MCF 10A (cell line): ENCODE measurements at regions of chr12 and their contacts with region 1.

Region 1: GRCh38 chr12:122051231-122051876 is 27.2 kb upstream of the MLXIP start:
- DNase-seq: no peak
- H3K4me3 Mint-ChIP-seq: no peak overlapping the region
- H3K27ac Mint-ChIP-seq: no peak overlapping the region
- H3K4me1 Mint-ChIP-seq: no peaks in the 10 kb centered on the region
- H3K27me3 Mint-ChIP-seq: no peaks in the 10 kb centered on the region
- CTCF ChIP-seq: no peak

Region 2: DNA sequence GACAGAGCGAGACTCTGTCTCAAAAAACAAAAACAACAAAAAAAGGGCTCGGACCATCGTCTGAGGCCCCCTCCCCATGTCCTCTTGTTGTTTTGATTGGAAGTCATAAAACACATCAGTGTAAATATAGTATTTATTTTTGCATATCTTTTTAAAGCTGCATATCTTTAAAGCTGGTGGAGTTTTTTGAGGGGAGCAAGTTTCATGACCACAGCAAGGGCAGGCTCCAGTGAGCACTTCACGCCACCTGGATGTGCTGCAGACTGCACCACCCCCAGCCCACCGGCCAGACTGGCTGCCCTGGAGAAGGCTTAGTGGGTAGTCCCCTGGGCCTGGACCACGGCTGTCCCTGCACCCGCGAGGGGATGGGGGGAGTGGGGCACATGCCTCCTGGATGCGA is 41.6 kb before region 1 on chr12:
- CTCF ChIA-PET with region 1: no interaction called
- POLR2A ChIA-PET with region 1: no interaction called
- intact Hi-C with region 1: no loop called
- DNase-seq: no peak
- H3K4me3 Mint-ChIP-seq: no peak overlapping the region
- H3K27ac Mint-ChIP-seq: no peak overlapping the region
- H3K4me1 Mint-ChIP-seq: no peaks in the 10 kb centered on the region
- H3K27me3 Mint-ChIP-seq: no peaks in the 10 kb centered on the region
- CTCF ChIP-seq: no peak

Region 3: DNA sequence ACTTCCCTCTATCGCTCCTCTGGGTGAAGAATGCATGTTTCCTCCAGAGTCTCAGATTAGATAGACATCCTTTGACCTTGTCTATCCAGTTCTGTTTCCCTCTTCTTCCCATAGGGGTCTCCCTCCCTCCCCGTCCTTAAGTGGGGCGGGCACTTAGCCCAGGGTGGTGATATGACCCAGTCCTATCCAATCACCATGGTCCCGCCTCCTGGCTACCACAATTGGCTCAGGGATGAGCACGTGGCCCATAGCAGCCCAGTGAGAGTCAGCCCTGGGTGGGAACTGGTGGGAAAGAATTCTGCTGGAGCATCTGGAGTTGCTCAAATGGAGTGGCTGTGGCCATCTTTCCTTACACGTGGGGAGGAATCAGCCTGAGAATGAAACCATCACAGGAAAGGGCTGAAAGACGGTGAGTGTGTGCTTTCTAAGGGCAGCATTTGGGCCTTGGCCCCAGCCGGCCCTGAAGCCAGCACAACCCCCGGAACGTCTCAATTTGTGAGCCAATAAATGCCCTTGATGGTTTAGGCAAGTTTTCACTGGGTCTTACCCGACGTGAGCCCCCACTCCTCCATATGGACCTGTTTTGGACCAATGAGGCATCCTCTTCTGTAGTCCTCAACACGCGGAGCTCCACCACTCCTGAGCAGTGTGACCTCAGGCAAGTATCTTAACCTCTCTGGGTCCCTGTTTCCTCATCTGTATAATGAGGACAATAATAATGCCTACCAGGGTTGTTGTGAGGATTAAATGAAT is 12.8 kb after region 1 on chr12:
- CTCF ChIA-PET with region 1: interaction called, 10 read pairs
- POLR2A ChIA-PET with region 1: no interaction called
- intact Hi-C with region 1: no loop called
- DNase-seq: peak; percentile 86
- H3K4me3 Mint-ChIP-seq: no peak overlapping the region
- H3K27ac Mint-ChIP-seq: no peak overlapping the region
- H3K4me1 Mint-ChIP-seq: peaks cover 13% of the 10 kb centered on the region
- H3K27me3 Mint-ChIP-seq: no peaks in the 10 kb centered on the region
- CTCF ChIP-seq: no peak

Region 4: GRCh38 chr12:122097927-122098756 is 46.8 kb after region 1 on chr12:
- CTCF ChIA-PET with region 1: interaction called, 15 read pairs
- POLR2A ChIA-PET with region 1: interaction called, 3 read pairs
- intact Hi-C with region 1: no loop called
- DNase-seq: no peak
- H3K4me3 Mint-ChIP-seq: peak overlapping the region; percentile 51
- H3K27ac Mint-ChIP-seq: peak overlapping the region; percentile 97
- H3K4me1 Mint-ChIP-seq: peaks cover 39% of the 10 kb centered on the region
- H3K27me3 Mint-ChIP-seq: no peaks in the 10 kb centered on the region
- CTCF ChIP-seq: no peak

Region 5: DNA sequence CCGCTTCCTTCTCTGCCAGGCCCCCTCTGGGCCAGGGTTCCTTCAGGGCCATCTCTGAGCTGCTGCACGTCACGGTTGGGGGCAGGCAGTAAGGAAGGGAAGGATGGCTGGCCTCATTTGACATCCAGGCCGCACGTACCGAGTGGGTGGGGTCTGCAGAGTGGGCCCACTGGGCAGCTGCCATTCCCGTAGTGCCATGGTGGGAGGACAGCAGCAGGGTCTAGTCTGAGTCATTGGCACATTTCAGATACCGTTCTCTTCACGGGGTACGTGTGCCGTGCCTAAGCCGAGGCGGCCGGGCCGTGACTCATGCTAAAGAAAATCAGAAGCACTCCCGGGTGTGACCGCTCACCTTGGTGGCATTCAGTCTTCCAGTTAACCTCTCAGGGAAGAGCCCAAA is 78.8 kb after region 1 on chr12:
- CTCF ChIA-PET with region 1: interaction called, 23 read pairs
- POLR2A ChIA-PET with region 1: interaction called, 4 read pairs
- intact Hi-C with region 1: loop called (anchors 2 kb)
- DNase-seq: peak; percentile 61
- H3K4me3 Mint-ChIP-seq: no peak overlapping the region
- H3K27ac Mint-ChIP-seq: no peak overlapping the region
- H3K4me1 Mint-ChIP-seq: peaks cover 5% of the 10 kb centered on the region
- H3K27me3 Mint-ChIP-seq: no peaks in the 10 kb centered on the region
- CTCF ChIP-seq: no peak

Region 6: GRCh38 chr12:122147514-122148290 is 96.3 kb after region 1 on chr12:
- CTCF ChIA-PET with region 1: no interaction called
- POLR2A ChIA-PET with region 1: no interaction called
- intact Hi-C with region 1: no loop called
- DNase-seq: no peak
- H3K4me3 Mint-ChIP-seq: no peak overlapping the region
- H3K27ac Mint-ChIP-seq: no peak overlapping the region
- H3K4me1 Mint-ChIP-seq: no peaks in the 10 kb centered on the region
- H3K27me3 Mint-ChIP-seq: peaks cover 12% of the 10 kb centered on the region
- CTCF ChIP-seq: no peak

Region 7: GRCh38 chr12:122190842-122191668 is 139.7 kb after region 1 on chr12:
- CTCF ChIA-PET with region 1: interaction called, 16 read pairs
- POLR2A ChIA-PET with region 1: no interaction called
- intact Hi-C with region 1: loop called (anchors 1 kb)
- DNase-seq: peak; percentile 67
- H3K4me3 Mint-ChIP-seq: no peak overlapping the region
- H3K27ac Mint-ChIP-seq: no peak overlapping the region
- H3K4me1 Mint-ChIP-seq: no peaks in the 10 kb centered on the region
- H3K27me3 Mint-ChIP-seq: no peaks in the 10 kb centered on the region
- CTCF ChIP-seq: peak; percentile 83